PC-9 (cell line): ENCODE measurements at regions of chr18 and their contacts with region 1.

Region 1: DNA sequence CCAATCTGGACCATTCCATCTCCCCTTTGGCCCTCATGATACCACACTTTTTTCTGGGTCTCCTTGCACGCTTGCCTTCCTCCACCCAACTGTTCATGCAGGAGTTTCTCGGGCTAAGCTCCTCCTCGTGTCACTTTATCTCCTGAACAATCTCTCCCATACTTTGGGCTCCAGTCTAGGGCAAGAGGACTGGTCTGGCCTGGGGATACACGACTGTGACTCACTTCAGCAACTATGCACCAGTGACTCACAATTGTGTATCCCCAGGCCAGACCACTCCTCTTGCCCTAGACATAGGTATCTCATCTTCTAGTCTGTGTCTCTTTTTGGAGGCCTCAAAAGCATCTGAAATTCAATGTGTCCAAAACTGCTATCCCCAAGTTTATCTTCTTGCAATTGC is 149.4 kb upstream of the PTPRM start:
- DNase-seq: peak; percentile 64 to 75
- H3K4me3 ChIP-seq: no peak overlapping the region
- H3K27ac ChIP-seq: no peak overlapping the region
- H3K4me1 ChIP-seq: peaks cover 16% of the 10 kb centered on the region
- H3K27me3 ChIP-seq: no peaks in the 10 kb centered on the region
- CTCF ChIP-seq: no peak

Region 2: DNA sequence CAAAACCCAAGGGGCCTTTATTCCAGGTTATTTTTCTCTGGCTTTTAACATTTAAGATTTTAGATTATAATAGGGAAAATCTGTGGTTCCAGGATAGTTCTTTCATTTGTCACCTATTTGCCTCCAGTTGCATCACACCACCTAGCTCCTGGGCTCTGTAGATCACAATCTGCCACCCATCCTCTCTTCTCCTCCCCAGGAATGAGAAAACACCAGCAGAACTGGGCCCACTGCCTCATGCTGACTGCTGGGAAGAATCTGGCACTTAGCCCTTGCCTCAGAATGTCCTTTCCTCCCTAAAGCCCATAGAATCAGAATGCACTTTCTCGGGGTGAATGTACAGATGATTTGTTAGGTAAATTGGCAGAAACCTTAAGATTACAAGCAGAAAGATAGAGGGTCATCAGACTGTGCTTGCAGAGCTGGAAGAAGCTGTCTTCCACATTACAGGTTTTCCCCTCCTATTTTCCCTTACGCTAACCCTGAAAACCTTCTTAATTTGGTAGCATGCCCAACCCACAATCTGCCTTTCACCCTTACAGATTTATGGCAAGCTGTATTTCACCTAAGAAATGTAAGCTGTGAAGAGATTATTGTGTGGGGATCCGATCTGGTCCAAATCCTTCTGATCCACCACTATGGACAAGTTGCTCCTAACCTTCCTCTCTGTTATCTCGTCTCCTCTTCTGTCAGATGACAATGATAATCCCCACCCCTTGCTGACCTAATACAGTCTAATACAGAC is 114.3 kb before region 1 on chr18:
- CTCF ChIA-PET with region 1: no interaction called
- POLR2A ChIA-PET with region 1: no interaction called
- intact Hi-C with region 1: loop called (anchors 10 kb)
- DNase-seq: peak in 1 of 2 experiments; percentile 14
- H3K4me3 ChIP-seq: no peak overlapping the region
- H3K27ac ChIP-seq: no peak overlapping the region
- H3K4me1 ChIP-seq: no peaks in the 10 kb centered on the region
- H3K27me3 ChIP-seq: peaks cover 8% of the 10 kb centered on the region
- CTCF ChIP-seq: no peak

Region 3: DNA sequence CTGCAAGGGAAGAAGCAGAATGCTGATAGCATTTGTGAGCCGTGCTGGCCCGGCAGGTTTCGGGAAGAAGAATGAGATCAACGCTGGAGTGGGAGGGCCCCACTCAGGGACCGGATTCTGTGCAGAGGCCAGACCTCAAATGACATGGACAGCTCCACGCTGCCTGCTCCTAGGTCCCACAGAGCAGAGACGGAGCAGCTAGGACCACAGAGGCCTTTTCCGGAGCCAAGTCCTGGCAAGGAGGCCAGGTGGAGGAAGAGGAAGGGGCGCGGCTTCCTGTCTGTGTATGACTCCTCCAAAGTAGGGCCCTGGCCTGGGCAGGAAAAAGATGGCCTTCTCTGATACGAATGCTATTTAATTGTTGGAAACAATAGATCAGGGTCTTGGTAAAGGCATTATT is 46.9 kb before region 1 on chr18:
- CTCF ChIA-PET with region 1: no interaction called
- POLR2A ChIA-PET with region 1: interaction called, 21 read pairs
- intact Hi-C with region 1: no loop called
- DNase-seq: no peak
- H3K4me3 ChIP-seq: no peak overlapping the region
- H3K27ac ChIP-seq: no peak overlapping the region
- H3K4me1 ChIP-seq: no peaks in the 10 kb centered on the region
- H3K27me3 ChIP-seq: peaks cover 54% of the 10 kb centered on the region
- CTCF ChIP-seq: no peak

Region 4: GRCh38 chr18:7447318-7448028 is 29.7 kb after region 1 on chr18:
- CTCF ChIA-PET with region 1: no interaction called
- POLR2A ChIA-PET with region 1: no interaction called
- intact Hi-C with region 1: no loop called
- DNase-seq: no peak
- H3K4me3 ChIP-seq: no peak overlapping the region
- H3K27ac ChIP-seq: no peak overlapping the region
- H3K4me1 ChIP-seq: no peaks in the 10 kb centered on the region
- H3K27me3 ChIP-seq: peaks cover 92% of the 10 kb centered on the region
- CTCF ChIP-seq: no peak

Region 5: GRCh38 chr18:7482342-7482741 is 64.6 kb after region 1 on chr18:
- CTCF ChIA-PET with region 1: no interaction called
- POLR2A ChIA-PET with region 1: no interaction called
- intact Hi-C with region 1: no loop called
- DNase-seq: no peak
- H3K4me3 ChIP-seq: no peak overlapping the region
- H3K27ac ChIP-seq: no peak overlapping the region
- H3K4me1 ChIP-seq: no peaks in the 10 kb centered on the region
- H3K27me3 ChIP-seq: peaks cover 59% of the 10 kb centered on the region
- CTCF ChIP-seq: no peak

Region 6: DNA sequence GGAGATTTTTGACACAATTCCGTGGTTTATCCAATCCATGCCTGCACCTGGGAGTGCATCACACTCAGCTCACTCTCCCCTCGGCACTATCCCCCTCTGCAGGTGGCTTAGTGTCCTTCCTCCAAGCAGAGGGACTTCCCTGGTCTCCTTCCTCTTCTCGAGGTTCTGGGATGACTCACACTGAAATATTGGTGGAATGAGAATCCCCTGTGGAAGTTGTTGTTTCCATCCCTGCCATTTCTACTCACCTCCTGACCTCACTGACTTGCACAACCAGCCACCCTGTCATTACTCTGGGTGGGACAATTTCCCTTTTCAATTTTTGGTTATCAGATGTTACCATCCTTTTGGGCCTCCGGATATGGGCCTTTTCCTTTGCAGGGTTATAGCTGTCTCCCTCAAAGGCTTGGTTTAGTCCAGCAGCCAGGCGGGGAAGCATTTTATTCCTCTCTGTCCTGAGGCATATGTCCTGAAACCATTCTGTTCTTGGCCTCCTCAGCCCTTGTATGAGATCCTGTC is 209.2 kb after region 1 on chr18:
- CTCF ChIA-PET with region 1: no interaction called
- POLR2A ChIA-PET with region 1: no interaction called
- intact Hi-C with region 1: loop called (anchors 5 kb)
- DNase-seq: peak; percentile 52 to 84
- H3K4me3 ChIP-seq: peak overlapping the region; percentile 16; the same call in 1 of the 2 replicates
- H3K27ac ChIP-seq: peak overlapping the region; percentile 53
- H3K4me1 ChIP-seq: peaks cover 23% of the 10 kb centered on the region
- H3K27me3 ChIP-seq: no peaks in the 10 kb centered on the region
- CTCF ChIP-seq: peak; percentile 58

Region 7: GRCh38 chr18:9366192-9366591 is 1948.5 kb after region 1 on chr18:
- CTCF ChIA-PET with region 1: interaction called, 13 read pairs
- POLR2A ChIA-PET with region 1: no interaction called
- intact Hi-C with region 1: no loop called
- DNase-seq: peak in 1 of 2 experiments; percentile 71
- H3K4me3 ChIP-seq: no peak overlapping the region
- H3K27ac ChIP-seq: no peak overlapping the region
- H3K4me1 ChIP-seq: peaks cover 40% of the 10 kb centered on the region
- H3K27me3 ChIP-seq: no peaks in the 10 kb centered on the region
- CTCF ChIP-seq: no peak